ENCODE measurements at regions of chr16 and their contacts with region 1.

Region 1: DNA sequence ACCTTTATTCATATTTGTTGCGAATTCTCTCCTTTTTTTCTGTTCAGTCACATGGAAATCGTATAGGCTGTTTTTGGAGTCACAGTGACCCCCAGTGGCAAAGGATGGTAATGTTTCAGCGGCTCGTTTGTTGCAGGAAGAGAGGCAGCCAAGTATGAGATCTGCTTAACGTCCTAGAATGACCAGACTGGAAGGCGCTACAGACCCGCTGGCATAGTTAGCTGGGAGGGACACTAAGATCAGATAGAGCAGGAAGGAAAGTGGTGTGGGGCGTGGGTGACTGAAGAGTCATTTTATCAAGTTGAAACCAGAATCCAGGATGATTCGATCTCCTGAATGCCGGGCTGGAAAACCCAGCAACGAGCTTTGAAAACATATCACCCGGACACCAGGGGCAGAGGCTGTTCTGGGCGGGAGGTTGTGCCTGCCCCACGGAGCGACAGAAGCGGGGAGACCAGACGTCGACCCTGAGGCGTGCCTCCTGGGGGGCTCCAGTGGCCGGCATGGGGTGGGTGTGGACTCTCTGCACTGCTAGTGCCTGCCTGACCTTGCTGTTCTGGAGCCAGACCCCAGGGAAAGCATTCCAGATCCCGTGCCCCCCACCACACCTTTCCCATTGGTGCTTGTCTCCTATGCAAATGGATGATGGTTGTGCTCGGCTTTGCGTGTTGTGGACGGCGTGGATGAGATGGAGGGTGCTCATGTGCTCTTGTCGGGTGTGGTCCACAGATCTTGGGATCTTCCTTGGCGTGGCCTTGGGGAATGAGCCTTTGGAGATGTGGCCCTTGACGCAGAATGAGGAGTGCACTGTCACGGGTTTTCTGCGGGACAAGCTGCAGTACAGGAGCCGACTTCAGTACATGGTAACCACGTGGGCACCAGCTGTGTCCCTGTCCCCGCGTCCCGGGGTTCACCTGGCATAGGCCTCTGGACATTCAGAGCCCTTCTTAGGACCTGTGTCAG is 7.7 kb downstream of the IL34 start:
- DNase-seq: peak; percentile 93
- H3K4me3 Mint-ChIP-seq: no peak overlapping the region
- H3K27ac Mint-ChIP-seq: no peak overlapping the region
- H3K4me1 Mint-ChIP-seq: peaks cover 5% of the 10 kb centered on the region
- H3K27me3 Mint-ChIP-seq: no peaks in the 10 kb centered on the region

Region 2: GRCh38 chr16:70162041-70162451 is 492.0 kb before region 1 on chr16:
- CTCF ChIA-PET with region 1: interaction called, 4 read pairs
- intact Hi-C with region 1: loop called (anchors 10 kb)
- DNase-seq: no peak
- H3K4me3 Mint-ChIP-seq: no peak overlapping the region
- H3K27ac Mint-ChIP-seq: peak overlapping the region; percentile 2
- H3K4me1 Mint-ChIP-seq: peaks cover 3% of the 10 kb centered on the region
- H3K27me3 Mint-ChIP-seq: no peaks in the 10 kb centered on the region

Region 3: GRCh38 chr16:70370924-70371323 is 283.2 kb before region 1 on chr16:
- CTCF ChIA-PET with region 1: interaction called, 6 read pairs
- intact Hi-C with region 1: loop called (anchors 1 kb)
- DNase-seq: no peak
- H3K4me3 Mint-ChIP-seq: no peak overlapping the region
- H3K27ac Mint-ChIP-seq: no peak overlapping the region
- H3K4me1 Mint-ChIP-seq: peaks cover 2% of the 10 kb centered on the region
- H3K27me3 Mint-ChIP-seq: no peaks in the 10 kb centered on the region

Region 4: GRCh38 chr16:70508752-70509151 is 145.3 kb before region 1 on chr16:
- CTCF ChIA-PET with region 1: interaction called, 5 read pairs
- intact Hi-C with region 1: loop called (anchors 1 kb)
- DNase-seq: no peak
- H3K4me3 Mint-ChIP-seq: no peak overlapping the region
- H3K27ac Mint-ChIP-seq: no peak overlapping the region
- H3K4me1 Mint-ChIP-seq: peaks cover 2% of the 10 kb centered on the region
- H3K27me3 Mint-ChIP-seq: no peaks in the 10 kb centered on the region

Region 5: GRCh38 chr16:70642633-70643032 is 11.5 kb before region 1 on chr16:
- CTCF ChIA-PET with region 1: no interaction called
- intact Hi-C with region 1: no loop called
- DNase-seq: no peak
- H3K4me3 Mint-ChIP-seq: no peak overlapping the region
- H3K27ac Mint-ChIP-seq: no peak overlapping the region
- H3K4me1 Mint-ChIP-seq: no peaks in the 10 kb centered on the region
- H3K27me3 Mint-ChIP-seq: no peaks in the 10 kb centered on the region

Region 6: GRCh38 chr16:70691223-70692129 is 37.4 kb after region 1 on chr16:
- CTCF ChIA-PET with region 1: no interaction called
- intact Hi-C with region 1: no loop called
- DNase-seq: no peak
- H3K4me3 Mint-ChIP-seq: no peak overlapping the region
- H3K27ac Mint-ChIP-seq: no peak overlapping the region
- H3K4me1 Mint-ChIP-seq: peaks cover 13% of the 10 kb centered on the region
- H3K27me3 Mint-ChIP-seq: no peaks in the 10 kb centered on the region

Region 7: DNA sequence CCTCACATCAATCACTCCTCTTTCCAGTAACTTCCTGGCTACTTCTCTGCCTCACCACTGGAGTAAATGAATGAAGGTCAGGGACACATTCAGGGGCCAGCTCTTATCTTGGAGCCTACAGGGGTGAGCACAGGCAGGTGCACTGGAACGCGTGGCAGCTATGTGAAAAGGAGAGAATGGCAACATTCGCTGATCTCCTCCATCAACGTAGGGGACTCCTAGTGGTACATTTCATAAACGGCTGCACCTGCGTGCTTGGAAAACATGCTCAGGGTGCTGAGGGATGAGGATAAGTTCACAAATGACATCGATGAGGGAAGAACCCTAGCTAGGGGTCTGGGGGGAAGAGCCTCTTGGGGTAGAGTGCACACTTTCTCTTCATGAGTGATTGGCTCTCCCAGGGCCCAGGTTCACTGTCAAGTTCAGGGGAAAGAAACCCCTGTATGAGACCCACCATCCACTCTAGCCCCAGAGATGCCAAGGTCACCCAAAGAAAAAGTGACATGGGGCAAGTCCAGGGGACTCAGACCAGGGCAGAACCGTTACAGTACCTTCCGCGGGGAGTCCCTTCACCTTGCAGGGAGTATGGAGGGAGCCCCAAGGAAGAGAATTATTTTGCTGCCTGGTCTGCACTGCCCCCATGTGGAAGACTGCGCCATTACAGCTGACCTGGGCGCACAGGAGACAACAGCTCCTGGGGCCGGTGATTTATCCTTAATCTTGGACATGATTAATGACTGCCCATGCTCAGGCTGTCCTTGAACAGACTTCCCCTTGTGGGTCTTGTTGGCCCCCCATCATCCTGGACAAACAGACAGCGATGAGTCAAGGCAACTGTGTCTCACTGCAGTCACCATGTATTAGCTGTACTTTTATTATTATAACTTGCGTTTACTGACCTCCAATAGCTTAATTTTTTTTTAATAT is 116.8 kb after region 1 on chr16:
- CTCF ChIA-PET with region 1: interaction called, 24 read pairs
- intact Hi-C with region 1: loop called (anchors 1 kb)
- DNase-seq: peak; percentile 83
- H3K4me3 Mint-ChIP-seq: no peak overlapping the region
- H3K27ac Mint-ChIP-seq: no peak overlapping the region
- H3K4me1 Mint-ChIP-seq: peaks cover 3% of the 10 kb centered on the region
- H3K27me3 Mint-ChIP-seq: no peaks in the 10 kb centered on the region

Measured in activated naive CD4-positive, alpha-beta T cell treated with anti-CD3 and anti-CD28 coated beads for 36 hours (primary cell).